ENCODE measurements at regions of chr2 and their contacts with region 1.

Region 1: GRCh38 chr2:85888684-85889626 is at the start of gene ST3GAL5:
- DNase-seq: peak; percentile 93
- ATAC-seq: peak; percentile 89
- H3K4me3 Mint-ChIP-seq: peak within 1 kb of the TSS; percentile 82
- H3K27ac Mint-ChIP-seq: peak within 1 kb of the TSS; percentile 86
- H3K4me1 Mint-ChIP-seq: peaks cover 72% of the 10 kb centered on the region
- H3K27me3 Mint-ChIP-seq: no peaks in the 10 kb centered on the region
- total RNA-seq, gene ST3GAL5: 73.9 to 74.0 TPM

Region 2: GRCh38 chr2:85838181-85838580 is 50.8 kb before region 1 on chr2:
- CTCF ChIA-PET with region 1: interaction called, 187 read pairs
- DNase-seq: no peak
- ATAC-seq: no peak
- H3K4me3 Mint-ChIP-seq: no peak overlapping the region
- H3K27ac Mint-ChIP-seq: no peak overlapping the region
- H3K4me1 Mint-ChIP-seq: peaks cover 35% of the 10 kb centered on the region
- H3K27me3 Mint-ChIP-seq: peaks cover 3% of the 10 kb centered on the region

Region 3: GRCh38 chr2:85865539-85866164 is 23.3 kb before region 1 on chr2:
- CTCF ChIA-PET with region 1: interaction called, 44 read pairs
- DNase-seq: peak; percentile 56
- ATAC-seq: peak; percentile 63
- H3K4me3 Mint-ChIP-seq: no peak overlapping the region
- H3K27ac Mint-ChIP-seq: peak overlapping the region; percentile 14
- H3K4me1 Mint-ChIP-seq: peaks cover 65% of the 10 kb centered on the region
- H3K27me3 Mint-ChIP-seq: no peaks in the 10 kb centered on the region

Region 4: GRCh38 chr2:85999061-85999831 is 110.3 kb after region 1 on chr2:
- CTCF ChIA-PET with region 1: interaction called, 27 read pairs
- DNase-seq: peak; percentile 85
- ATAC-seq: peak; percentile 92
- H3K4me3 Mint-ChIP-seq: peak overlapping the region; percentile 56
- H3K27ac Mint-ChIP-seq: peak overlapping the region; percentile 95
- H3K4me1 Mint-ChIP-seq: peaks cover 72% of the 10 kb centered on the region
- H3K27me3 Mint-ChIP-seq: no peaks in the 10 kb centered on the region

Region 5: DNA sequence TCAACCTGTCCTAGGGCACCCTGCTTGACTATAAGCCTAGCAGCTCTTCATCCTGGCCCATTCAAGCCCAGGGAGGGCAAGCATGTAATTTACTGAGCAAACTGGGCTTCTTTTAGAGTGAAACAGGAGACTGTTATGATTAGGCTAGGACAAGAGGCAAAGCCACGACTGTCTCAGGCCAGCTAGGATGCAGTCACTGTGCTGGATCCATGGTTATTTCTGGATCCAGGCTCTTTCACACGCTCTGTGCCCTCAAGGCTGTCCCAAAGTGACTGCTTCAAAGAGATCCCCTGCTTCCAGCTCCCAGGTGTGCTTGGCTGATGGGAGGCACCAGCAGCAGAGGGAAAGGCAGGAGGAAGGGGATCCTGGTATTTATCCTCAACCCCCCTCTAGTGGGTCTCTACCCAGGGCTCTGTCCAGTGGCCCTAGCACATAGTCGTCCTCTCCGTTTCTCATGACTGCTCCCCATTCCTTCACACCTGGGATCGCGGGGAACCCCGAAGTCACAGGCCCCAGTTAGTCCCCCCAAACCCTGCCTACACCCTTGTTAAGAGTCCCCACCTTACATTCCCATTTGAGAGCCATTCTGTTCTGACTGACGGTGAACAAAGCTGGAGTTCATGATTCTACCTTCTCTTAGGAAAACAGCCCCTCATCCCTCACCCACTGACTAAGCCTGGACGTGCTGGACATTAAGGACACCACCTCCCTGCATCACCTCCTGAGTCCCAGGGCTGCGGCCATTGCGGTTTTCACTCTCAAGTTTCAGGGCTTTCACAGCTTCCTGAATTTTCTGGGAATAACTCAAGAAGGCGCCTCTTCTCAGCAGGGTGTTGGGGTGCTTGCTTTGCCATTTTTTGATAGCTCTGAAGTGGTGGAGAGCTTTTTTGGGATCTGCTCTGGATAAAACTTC is 153.6 kb after region 1 on chr2:
- CTCF ChIA-PET with region 1: interaction called, 121 read pairs
- DNase-seq: peak; percentile 31
- ATAC-seq: no peak
- H3K4me3 Mint-ChIP-seq: no peak overlapping the region
- H3K27ac Mint-ChIP-seq: no peak overlapping the region
- H3K4me1 Mint-ChIP-seq: peaks cover 43% of the 10 kb centered on the region
- H3K27me3 Mint-ChIP-seq: no peaks in the 10 kb centered on the region

Region 6: DNA sequence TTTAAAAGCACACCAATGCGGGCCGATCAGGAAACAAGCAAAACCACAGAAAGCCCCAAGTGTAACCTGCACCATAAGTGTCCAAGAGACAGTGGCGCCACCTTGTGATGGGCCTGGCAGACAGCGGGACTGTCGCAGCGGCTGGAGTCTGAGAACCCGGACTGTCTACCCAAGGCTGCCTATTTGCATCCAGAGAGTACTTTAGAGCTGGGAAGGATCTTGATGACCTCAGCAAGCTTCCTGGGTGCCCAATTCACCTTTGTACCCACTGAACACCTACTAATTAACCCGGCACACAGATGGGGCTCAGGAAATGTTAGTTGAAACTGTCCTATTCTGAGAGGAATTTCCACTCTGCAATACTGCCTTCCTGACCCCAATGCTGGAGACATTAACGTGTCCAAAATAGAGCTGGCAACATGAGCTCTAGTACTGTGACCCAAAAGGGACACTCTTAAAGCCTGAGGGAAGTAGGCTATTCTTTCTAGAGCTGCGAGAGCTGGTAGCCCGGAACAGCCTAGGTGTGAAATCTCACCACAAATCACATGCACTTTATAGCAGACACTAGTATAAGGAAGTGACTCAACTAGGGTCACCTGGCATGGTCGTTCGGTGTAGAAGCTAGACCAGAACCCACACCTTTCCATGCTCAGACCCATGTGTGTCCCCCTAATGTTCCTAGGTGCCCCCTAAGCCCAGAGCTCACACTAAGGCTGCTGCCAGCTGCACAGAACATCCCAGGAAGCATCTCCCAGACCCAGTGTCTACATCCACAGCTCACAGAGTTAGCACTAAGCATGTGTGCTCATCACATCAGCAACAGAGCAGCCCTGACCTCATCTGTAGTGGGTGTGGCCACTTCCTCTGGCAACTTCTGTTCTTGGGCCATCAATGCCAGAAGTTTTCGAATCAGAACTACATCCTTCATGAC is 191.3 kb after region 1 on chr2:
- CTCF ChIA-PET with region 1: interaction called, 126 read pairs
- DNase-seq: peak; percentile 93
- ATAC-seq: peak; percentile 85
- H3K4me3 Mint-ChIP-seq: no peak overlapping the region
- H3K27ac Mint-ChIP-seq: peak overlapping the region; percentile 88
- H3K4me1 Mint-ChIP-seq: peaks cover 35% of the 10 kb centered on the region
- H3K27me3 Mint-ChIP-seq: no peaks in the 10 kb centered on the region